ENCODE measurements at regions of chr3 and their contacts with region 1.

Region 1: DNA sequence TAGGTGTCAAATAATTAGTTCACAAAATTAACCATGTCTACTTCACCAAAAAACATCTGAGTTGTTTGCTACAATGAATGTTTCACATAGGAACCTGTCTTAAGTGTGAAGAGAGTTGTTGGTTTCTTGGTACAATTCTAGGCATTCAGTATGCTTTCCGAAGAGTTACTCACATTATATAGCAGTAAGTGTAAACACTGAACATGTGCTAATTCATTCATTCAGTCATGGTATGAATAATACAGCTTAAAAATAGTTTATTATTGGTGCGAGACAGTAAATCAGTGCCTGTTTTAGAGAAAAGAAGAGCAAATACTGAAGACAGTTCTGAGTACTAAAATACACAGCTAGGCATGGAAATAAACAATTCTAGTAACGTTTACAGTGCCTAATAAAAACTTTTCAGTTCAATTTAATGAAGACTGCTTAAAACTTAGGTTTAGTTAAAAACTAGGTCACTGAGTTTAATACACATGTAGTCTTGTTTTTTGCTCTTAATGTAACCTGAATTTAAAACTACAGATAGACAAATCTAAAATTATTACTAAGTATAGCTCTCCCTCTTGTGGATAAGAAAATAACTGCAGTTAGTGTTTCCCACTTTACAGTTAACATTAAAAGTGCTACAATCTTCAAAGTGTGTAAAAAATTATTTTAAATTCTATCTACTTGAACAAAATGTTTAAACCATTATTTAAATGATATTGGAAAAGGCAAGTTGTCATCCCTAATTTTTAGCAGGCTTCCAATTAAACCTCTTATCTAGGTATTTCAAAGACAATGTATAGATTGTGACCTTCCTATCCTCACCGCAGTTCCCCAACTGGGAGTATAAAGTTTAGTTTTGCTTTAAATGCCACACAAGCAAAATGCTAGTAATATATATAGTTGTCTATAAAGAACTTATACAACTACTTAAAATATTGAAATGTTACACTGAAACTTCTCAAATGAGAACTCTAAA is 20.1 kb upstream of the ZCWPW2 start:
- DNase-seq: no peak
- H3K4me3 Mint-ChIP-seq: no peak overlapping the region
- H3K27ac Mint-ChIP-seq: no peak overlapping the region
- H3K4me1 Mint-ChIP-seq: peaks cover 34% of the 10 kb centered on the region
- H3K27me3 Mint-ChIP-seq: no peaks in the 10 kb centered on the region

Region 2: DNA sequence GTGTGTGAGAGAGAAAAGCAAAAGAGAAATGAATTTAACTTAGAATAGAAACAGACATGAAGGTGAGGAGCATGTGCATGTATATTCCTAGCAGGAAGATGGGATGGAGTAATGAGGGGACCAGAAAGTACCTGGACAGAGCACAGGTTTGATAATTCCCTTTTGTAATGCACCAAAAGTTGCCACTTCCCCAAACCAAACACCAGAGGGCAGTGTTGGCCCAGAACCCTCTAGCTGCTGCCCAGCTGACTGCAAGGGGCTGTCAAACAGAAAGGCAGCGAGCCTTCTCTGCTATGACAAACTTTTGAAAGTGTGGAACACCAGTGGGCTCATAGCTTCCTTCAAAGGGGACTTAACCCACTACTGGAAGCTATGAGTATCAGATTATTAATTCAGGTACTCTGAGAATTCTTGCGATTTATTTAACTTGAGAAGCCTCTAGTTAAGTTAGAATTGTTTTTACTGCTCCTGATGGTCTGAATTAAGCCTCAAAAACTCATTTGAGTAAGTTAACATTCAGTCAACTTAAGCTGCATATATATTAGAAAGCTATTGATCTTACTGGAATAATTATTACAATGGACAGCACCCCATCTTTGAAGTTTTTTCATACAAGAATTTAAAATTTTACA is 1194.2 kb before region 1 on chr3:
- intact Hi-C with region 1: loop called (anchors 10 kb)
- DNase-seq: peak; percentile 30
- H3K4me3 Mint-ChIP-seq: no peak overlapping the region
- H3K27ac Mint-ChIP-seq: no peak overlapping the region
- H3K4me1 Mint-ChIP-seq: no peaks in the 10 kb centered on the region
- H3K27me3 Mint-ChIP-seq: no peaks in the 10 kb centered on the region

Region 3: GRCh38 chr3:27632431-27633223 is 695.8 kb before region 1 on chr3:
- intact Hi-C with region 1: loop called (anchors 10 kb)
- DNase-seq: peak; percentile 34
- H3K4me3 Mint-ChIP-seq: peak overlapping the region; percentile 93
- H3K27ac Mint-ChIP-seq: peak overlapping the region; percentile 90
- H3K4me1 Mint-ChIP-seq: peaks cover 44% of the 10 kb centered on the region
- H3K27me3 Mint-ChIP-seq: no peaks in the 10 kb centered on the region

Region 4: GRCh38 chr3:27927882-27928281 is 400.6 kb before region 1 on chr3:
- intact Hi-C with region 1: loop called (anchors 1 kb)
- DNase-seq: no peak
- H3K4me3 Mint-ChIP-seq: no peak overlapping the region
- H3K27ac Mint-ChIP-seq: peak overlapping the region; percentile 62
- H3K4me1 Mint-ChIP-seq: peaks cover 56% of the 10 kb centered on the region
- H3K27me3 Mint-ChIP-seq: no peaks in the 10 kb centered on the region

Region 5: DNA sequence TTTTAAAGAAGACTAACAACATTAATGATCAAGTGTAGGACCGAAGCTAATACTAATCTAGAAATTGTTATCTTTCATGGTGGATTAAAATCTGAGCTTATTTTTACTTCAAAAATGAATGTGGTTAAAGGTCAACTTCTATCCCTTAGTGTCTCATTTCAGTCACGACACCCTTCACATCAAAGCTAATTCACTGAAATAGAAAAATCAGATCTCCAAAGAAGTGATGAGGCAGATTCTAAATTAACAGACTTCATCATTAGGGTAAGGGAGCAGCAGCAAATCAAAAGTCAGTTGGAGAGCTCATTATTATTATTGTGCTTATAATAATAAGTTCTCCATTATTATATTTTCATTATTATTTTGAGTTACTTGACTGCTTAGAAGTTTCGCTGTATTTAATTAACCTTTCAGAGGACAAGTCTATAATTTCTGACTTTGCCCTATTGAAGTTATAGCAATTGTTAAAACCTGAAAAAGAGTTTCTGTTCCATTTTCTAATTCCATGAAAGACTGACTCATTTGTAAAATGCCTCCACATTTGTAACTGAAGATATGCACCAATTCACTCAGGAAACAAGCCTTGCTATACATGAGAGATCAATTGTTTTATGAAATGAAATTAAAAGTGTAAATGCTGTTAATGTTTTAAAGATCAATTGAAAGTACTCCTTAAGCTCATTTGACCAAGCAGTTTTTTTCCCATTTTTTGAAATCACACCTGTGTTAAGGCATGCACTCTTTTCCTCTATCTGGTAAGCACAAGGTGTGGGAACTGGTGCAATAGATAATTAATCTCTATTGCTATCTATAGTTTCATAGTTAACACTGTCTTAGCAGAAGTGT is 110.2 kb before region 1 on chr3:
- intact Hi-C with region 1: loop called (anchors 1 kb)
- DNase-seq: no peak
- H3K4me3 Mint-ChIP-seq: no peak overlapping the region
- H3K27ac Mint-ChIP-seq: peak overlapping the region; percentile 64
- H3K4me1 Mint-ChIP-seq: peaks cover 17% of the 10 kb centered on the region
- H3K27me3 Mint-ChIP-seq: no peaks in the 10 kb centered on the region

Region 6: GRCh38 chr3:28317438-28318022 is 10.9 kb before region 1 on chr3:
- intact Hi-C with region 1: loop called (anchors 1 kb)
- DNase-seq: peak; percentile 16
- H3K4me3 Mint-ChIP-seq: no peak overlapping the region
- H3K27ac Mint-ChIP-seq: no peak overlapping the region
- H3K4me1 Mint-ChIP-seq: peaks cover 19% of the 10 kb centered on the region
- H3K27me3 Mint-ChIP-seq: no peaks in the 10 kb centered on the region